CD4-positive, alpha-beta memory T cell (primary cell): ENCODE measurements at regions of chr22 and their contacts with region 1.

Region 1: GRCh38 chr22:39319270-39320022 is at the start of gene RPL3:
- DNase-seq: peak; percentile 97 to 98 (median 98)
- H3K4me3 ChIP-seq: peak within 1 kb of the TSS; percentile 87 to 97
- H3K4me3 Mint-ChIP-seq: peak within 1 kb of the TSS; percentile 98 to 100 (median 100)
- H3K27ac ChIP-seq: peak within 1 kb of the TSS; percentile 83
- H3K27ac Mint-ChIP-seq: peak within 1 kb of the TSS; percentile 98 to 99 (median 99)
- H3K4me1 ChIP-seq: peaks cover 44% of the 10 kb centered on the region
- H3K4me1 Mint-ChIP-seq: peaks cover 25 to 55% (median 43%) of the 10 kb centered on the region in 4 donors
- H3K27me3 ChIP-seq: no peaks in the 10 kb centered on the region
- H3K27me3 Mint-ChIP-seq: no peaks in the 10 kb centered on the region
- total RNA-seq, gene RPL3: 3,492 to 3,635 TPM

Region 2: GRCh38 chr22:38872172-38872830 is 447.1 kb before region 1 on chr22 and contains the start of gene CBX6:
- CTCF ChIA-PET with region 1: interaction called, 13 read pairs
- POLR2A ChIA-PET with region 1: interaction called, 85 read pairs
- intact Hi-C with region 1: loop called (anchors 1 kb)
- DNase-seq: peak; percentile 91 to 96 (median 94)
- H3K4me3 ChIP-seq: peak within 1 kb of the TSS; percentile 71 to 72
- H3K4me3 Mint-ChIP-seq: peak within 1 kb of the TSS; percentile 93 to 96 (median 94)
- H3K27ac ChIP-seq: peak within 1 kb of the TSS; percentile 76
- H3K27ac Mint-ChIP-seq: peak within 1 kb of the TSS; percentile 90 to 97 (median 94)
- H3K4me1 ChIP-seq: peaks cover 53% of the 10 kb centered on the region
- H3K4me1 Mint-ChIP-seq: peaks cover 34 to 62% (median 45%) of the 10 kb centered on the region in 4 donors
- H3K27me3 ChIP-seq: no peaks in the 10 kb centered on the region
- H3K27me3 Mint-ChIP-seq: no peaks in the 10 kb centered on the region
- total RNA-seq, gene CBX6: 85.0 to 88.0 TPM

Region 3: DNA sequence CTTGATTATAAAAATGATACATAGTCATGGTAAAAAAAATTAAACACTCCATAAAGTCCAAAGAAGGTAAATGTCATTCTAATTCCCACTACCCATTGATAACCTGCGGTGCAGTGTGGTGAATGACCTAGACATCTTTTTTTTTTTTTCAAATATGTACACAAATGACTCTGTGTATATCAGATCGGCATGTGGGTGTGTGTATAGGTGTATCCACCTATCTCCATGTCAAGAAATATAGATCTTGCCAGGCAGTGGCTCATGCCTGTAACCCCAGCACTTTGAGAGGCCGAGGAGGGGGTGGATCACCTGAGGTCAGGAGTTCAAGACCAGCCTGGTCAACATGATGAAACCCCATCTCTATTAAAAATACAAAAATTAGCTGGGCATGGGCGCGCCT is 429.1 kb before region 1 on chr22:
- CTCF ChIA-PET with region 1: no interaction called
- POLR2A ChIA-PET with region 1: no interaction called
- intact Hi-C with region 1: no loop called
- DNase-seq: no peak
- H3K4me3 ChIP-seq: no peak overlapping the region
- H3K4me3 Mint-ChIP-seq: no peak overlapping the region
- H3K27ac ChIP-seq: no peak overlapping the region
- H3K27ac Mint-ChIP-seq: no peak overlapping the region
- H3K4me1 ChIP-seq: no peaks in the 10 kb centered on the region
- H3K4me1 Mint-ChIP-seq: no peaks in the 10 kb centered on the region
- H3K27me3 ChIP-seq: no peaks in the 10 kb centered on the region
- H3K27me3 Mint-ChIP-seq: peaks cover 3 to 7% of the 10 kb centered on the region in 2 donors

Region 4: DNA sequence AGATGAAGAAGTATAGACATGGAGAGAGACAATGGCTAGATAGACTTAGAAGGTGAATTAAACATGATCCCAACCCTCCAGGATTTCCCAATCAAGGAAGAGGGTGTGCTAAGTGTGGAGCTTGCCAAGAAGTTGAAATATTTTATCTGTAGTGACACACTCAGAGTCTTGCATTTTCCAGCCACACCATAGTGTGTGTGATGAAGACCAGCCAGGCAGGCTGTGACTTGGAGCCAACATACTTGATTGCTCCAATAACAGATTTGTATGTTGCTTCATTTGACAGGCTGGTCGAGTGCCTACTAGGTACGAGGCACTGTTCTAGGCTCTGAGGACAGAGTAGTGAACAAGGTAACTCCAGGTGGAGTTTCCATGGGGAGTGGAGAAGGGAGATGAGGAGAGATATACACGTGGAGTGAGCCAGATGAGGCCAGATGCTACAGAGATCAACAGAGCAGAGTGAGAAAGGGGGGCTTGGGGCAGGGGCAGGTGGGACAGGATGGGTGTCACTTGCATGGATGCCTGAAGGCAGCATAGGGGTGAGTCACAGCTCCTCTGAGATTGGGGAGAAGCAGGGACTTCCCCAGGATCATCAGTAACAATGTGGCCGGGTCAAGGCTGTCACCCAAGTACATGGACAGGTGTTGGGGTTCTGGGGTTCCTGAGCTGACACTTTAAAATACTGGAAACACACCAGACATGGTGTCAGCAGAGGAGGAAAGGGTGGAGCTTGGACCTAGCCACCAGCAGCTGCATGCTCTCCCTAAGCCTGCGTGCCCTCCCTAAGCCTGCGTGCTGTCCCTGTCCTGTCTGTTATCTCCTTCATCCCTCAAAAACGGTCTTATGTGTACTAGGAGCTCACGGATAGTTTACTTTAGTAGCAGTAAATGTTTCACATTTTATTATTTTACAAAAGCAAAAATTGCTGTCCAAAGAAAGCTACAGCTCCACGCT is 98.3 kb before region 1 on chr22:
- CTCF ChIA-PET with region 1: interaction called, 3 read pairs
- POLR2A ChIA-PET with region 1: interaction called, 11 read pairs
- intact Hi-C with region 1: no loop called
- DNase-seq: no peak
- H3K4me3 ChIP-seq: no peak overlapping the region
- H3K4me3 Mint-ChIP-seq: peak overlapping the region in 1 of 8 donors; percentile 51
- H3K27ac ChIP-seq: no peak overlapping the region
- H3K27ac Mint-ChIP-seq: peak overlapping the region in 6 of 7 donors; percentile 2 to 80 (median 46)
- H3K4me1 ChIP-seq: no peaks in the 10 kb centered on the region
- H3K4me1 Mint-ChIP-seq: peaks cover 0 to 11% (median 3%) of the 10 kb centered on the region in 4 donors
- H3K27me3 ChIP-seq: no peaks in the 10 kb centered on the region
- H3K27me3 Mint-ChIP-seq: no peaks in the 10 kb centered on the region

Region 5: GRCh38 chr22:39253435-39254070 is 65.9 kb before region 1 on chr22:
- CTCF ChIA-PET with region 1: interaction called, 3 read pairs
- POLR2A ChIA-PET with region 1: interaction called, 14 read pairs
- intact Hi-C with region 1: no loop called
- DNase-seq: no peak
- H3K4me3 ChIP-seq: no peak overlapping the region
- H3K4me3 Mint-ChIP-seq: no peak overlapping the region
- H3K27ac ChIP-seq: no peak overlapping the region
- H3K27ac Mint-ChIP-seq: no peak overlapping the region
- H3K4me1 ChIP-seq: peaks cover 31% of the 10 kb centered on the region
- H3K4me1 Mint-ChIP-seq: peaks cover 10 to 35% (median 18%) of the 10 kb centered on the region in 4 donors
- H3K27me3 ChIP-seq: no peaks in the 10 kb centered on the region
- H3K27me3 Mint-ChIP-seq: peaks cover 0 to 4% of the 10 kb centered on the region in 2 donors

Region 6: DNA sequence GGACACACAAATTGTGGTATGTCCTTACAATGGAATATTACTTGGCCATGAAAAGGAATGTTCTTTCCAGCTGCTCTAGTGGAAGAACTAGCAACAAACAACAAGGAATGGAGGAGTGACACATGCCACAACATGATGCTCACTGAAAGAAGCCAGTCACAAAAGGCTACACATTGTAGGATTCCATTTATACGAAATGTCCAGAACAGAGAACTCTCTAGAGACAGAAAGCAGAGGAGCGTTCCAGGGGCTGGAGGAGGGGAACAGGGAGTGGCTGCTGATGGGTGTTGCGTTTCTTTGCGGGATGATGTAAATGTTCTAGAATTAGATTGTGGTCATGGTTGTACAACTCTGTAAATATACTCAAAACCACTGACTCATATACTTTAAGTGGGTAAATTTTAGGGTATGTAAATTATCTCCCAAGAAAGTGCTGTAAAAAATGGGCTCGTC is 42.3 kb before region 1 on chr22:
- CTCF ChIA-PET with region 1: no interaction called
- POLR2A ChIA-PET with region 1: no interaction called
- intact Hi-C with region 1: no loop called
- DNase-seq: no peak
- H3K4me3 ChIP-seq: no peak overlapping the region
- H3K4me3 Mint-ChIP-seq: no peak overlapping the region
- H3K27ac ChIP-seq: no peak overlapping the region
- H3K27ac Mint-ChIP-seq: no peak overlapping the region
- H3K4me1 ChIP-seq: no peaks in the 10 kb centered on the region
- H3K4me1 Mint-ChIP-seq: peaks cover 0 to 2% (median 0%) of the 10 kb centered on the region in 4 donors
- H3K27me3 ChIP-seq: no peaks in the 10 kb centered on the region
- H3K27me3 Mint-ChIP-seq: peaks cover 3 to 8% of the 10 kb centered on the region in 2 donors

Region 7: GRCh38 chr22:39360674-39361413 is 41.4 kb after region 1 on chr22:
- CTCF ChIA-PET with region 1: no interaction called
- POLR2A ChIA-PET with region 1: no interaction called
- intact Hi-C with region 1: no loop called
- DNase-seq: no peak
- H3K4me3 ChIP-seq: no peak overlapping the region
- H3K4me3 Mint-ChIP-seq: no peak overlapping the region
- H3K27ac ChIP-seq: no peak overlapping the region
- H3K27ac Mint-ChIP-seq: peak overlapping the region in 1 of 7 donors; percentile 43
- H3K4me1 ChIP-seq: no peaks in the 10 kb centered on the region
- H3K4me1 Mint-ChIP-seq: peaks cover 0 to 3% (median 0%) of the 10 kb centered on the region in 4 donors
- H3K27me3 ChIP-seq: no peaks in the 10 kb centered on the region
- H3K27me3 Mint-ChIP-seq: no peaks in the 10 kb centered on the region

Region 8: GRCh38 chr22:39388261-39389011 is 69.0 kb after region 1 on chr22:
- CTCF ChIA-PET with region 1: interaction called, 4 read pairs
- POLR2A ChIA-PET with region 1: interaction called, 13 read pairs
- intact Hi-C with region 1: no loop called
- DNase-seq: peak; percentile 25 to 93 (median 86)
- H3K4me3 ChIP-seq: peak overlapping the region; percentile 17 to 56
- H3K4me3 Mint-ChIP-seq: peak overlapping the region; percentile 63 to 94 (median 88)
- H3K27ac ChIP-seq: peak overlapping the region; percentile 67
- H3K27ac Mint-ChIP-seq: peak overlapping the region; percentile 29 to 97 (median 89)
- H3K4me1 ChIP-seq: peaks cover 9% of the 10 kb centered on the region
- H3K4me1 Mint-ChIP-seq: peaks cover 2 to 24% (median 11%) of the 10 kb centered on the region in 4 donors
- H3K27me3 ChIP-seq: no peaks in the 10 kb centered on the region
- H3K27me3 Mint-ChIP-seq: peaks cover 0 to 2% of the 10 kb centered on the region in 2 donors

Region 9: DNA sequence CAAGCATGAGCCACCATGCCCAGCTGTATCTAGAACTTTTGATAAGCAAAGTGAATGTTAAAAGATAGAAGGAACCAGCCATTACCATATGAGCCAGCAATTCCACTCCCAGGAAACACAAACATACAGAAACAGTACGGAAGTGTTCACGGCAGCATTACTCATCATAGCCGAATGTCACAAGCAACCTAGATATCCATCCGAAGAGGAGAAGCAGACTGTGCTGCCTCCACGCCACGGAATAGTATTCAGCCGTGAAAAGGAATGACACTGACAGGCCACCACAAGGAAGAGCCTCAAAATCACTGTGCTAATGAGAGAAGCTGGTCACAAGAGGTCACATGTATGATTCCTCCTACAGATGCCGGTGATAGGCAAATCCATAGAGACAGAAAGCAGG is 119.7 kb after region 1 on chr22:
- CTCF ChIA-PET with region 1: no interaction called
- POLR2A ChIA-PET with region 1: no interaction called
- intact Hi-C with region 1: no loop called
- DNase-seq: no peak
- H3K4me3 ChIP-seq: no peak overlapping the region
- H3K4me3 Mint-ChIP-seq: no peak overlapping the region
- H3K27ac ChIP-seq: no peak overlapping the region
- H3K27ac Mint-ChIP-seq: no peak overlapping the region
- H3K4me1 ChIP-seq: peaks cover 9% of the 10 kb centered on the region
- H3K4me1 Mint-ChIP-seq: peaks cover 0 to 16% (median 3%) of the 10 kb centered on the region in 4 donors
- H3K27me3 ChIP-seq: no peaks in the 10 kb centered on the region
- H3K27me3 Mint-ChIP-seq: peaks cover 8 to 11% of the 10 kb centered on the region in 2 donors

Region 10: GRCh38 chr22:39520054-39520891 is 200.8 kb after region 1 on chr22 and contains the start of gene ATF4:
- CTCF ChIA-PET with region 1: interaction called, 5 read pairs
- POLR2A ChIA-PET with region 1: interaction called, 165 read pairs
- intact Hi-C with region 1: loop called (anchors 1 kb)
- DNase-seq: peak; percentile 96 to 98 (median 97)
- H3K4me3 ChIP-seq: peak within 1 kb of the TSS; percentile 85 to 96
- H3K4me3 Mint-ChIP-seq: peak within 1 kb of the TSS; percentile 92 to 99 (median 97)
- H3K27ac ChIP-seq: peak within 1 kb of the TSS; percentile 85
- H3K27ac Mint-ChIP-seq: peak within 1 kb of the TSS; percentile 96 to 100 (median 99)
- H3K4me1 ChIP-seq: peaks cover 46% of the 10 kb centered on the region
- H3K4me1 Mint-ChIP-seq: peaks cover 28 to 60% (median 47%) of the 10 kb centered on the region in 4 donors
- H3K27me3 ChIP-seq: no peaks in the 10 kb centered on the region
- H3K27me3 Mint-ChIP-seq: peaks cover 3 to 4% of the 10 kb centered on the region in 2 donors
- total RNA-seq, gene ATF4: 265 to 278 TPM